ENCODE measurements at regions of chr15 and their contacts with region 1.

Region 1: DNA sequence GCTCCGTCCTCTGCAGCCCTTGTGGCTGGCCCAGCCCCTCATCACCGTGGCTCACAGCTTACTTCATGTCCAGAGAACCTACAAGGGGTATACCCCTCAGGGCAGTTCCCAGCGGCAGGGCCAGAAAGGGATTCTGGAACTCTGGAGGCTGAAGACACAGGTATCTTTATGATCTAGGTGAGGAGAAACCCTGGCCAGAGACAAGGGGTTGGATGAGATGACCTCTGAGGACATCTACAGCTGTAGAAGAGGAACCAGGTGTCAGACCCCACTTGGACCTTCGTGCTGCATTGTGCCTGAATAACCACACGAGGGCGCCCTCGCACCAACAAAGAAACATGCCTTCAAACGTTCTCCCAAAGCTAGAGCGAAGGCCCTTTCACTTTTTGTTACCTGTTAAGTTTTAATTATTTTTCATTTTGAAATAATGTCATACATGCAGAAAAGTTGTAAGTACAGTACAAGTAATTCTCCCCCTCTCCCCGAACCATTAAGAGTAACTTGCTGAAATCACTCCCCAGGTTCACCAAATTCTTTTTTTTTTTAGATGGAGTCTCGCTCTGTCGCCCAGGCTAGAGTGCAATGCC is 118.7 kb upstream of the SMAD3 start:
- DNase-seq: peak; percentile 44 to 72
- H3K4me3 ChIP-seq: no peak overlapping the region
- H3K27ac ChIP-seq: no peak overlapping the region
- H3K4me1 ChIP-seq: peaks cover 17% of the 10 kb centered on the region
- H3K27me3 ChIP-seq: no peaks in the 10 kb centered on the region
- CTCF ChIP-seq: peak; percentile 89

Region 2: DNA sequence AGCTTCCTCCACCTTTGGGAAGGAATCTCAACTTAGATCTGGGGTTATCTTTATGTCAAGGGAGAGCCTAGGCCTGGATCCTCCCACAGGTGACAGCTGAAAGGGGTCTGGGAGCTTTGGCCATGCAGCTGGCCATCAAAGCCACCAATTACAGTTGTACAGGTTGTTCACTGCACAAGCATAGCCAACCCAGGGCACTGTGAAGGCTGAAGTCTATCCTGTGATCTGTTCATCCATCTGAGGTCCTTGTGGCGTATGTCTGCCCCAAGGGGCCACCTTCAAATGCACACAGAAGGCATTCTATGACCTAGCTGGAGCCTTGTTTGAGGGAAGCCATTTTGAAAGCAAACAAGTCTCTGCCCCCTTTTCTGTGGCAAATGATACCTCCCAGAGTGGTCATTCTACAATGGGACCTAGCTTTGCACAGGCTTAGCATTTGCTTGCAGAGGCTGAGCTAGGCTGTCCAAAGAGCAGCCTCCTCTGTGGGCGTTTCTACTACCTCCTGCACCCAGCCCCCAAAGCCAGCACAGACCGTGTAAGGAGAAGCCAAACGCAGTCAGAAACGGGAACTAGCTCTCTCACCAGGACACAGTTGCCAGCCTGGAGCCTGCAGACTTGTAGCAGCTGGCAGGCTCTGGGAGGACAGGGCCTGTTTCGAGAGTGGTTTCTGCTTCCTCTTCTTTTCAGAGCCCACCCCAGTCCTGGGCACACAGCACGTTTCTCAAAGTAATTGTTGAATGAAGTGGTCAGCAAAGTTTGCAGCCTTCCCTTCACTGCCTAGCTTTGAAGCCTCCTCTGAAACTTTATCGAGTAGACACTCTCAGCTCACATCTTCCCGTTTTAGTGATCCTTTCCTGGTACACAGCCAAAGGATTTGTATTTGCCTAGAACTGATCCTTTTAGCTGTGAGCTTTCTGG is 38.6 kb before region 1 on chr15:
- CTCF ChIA-PET with region 1: interaction called, 17 read pairs
- POLR2A ChIA-PET with region 1: no interaction called
- intact Hi-C with region 1: loop called (anchors 1 kb)
- DNase-seq: no peak
- H3K4me3 ChIP-seq: no peak overlapping the region
- H3K27ac ChIP-seq: no peak overlapping the region
- H3K4me1 ChIP-seq: no peaks in the 10 kb centered on the region
- H3K27me3 ChIP-seq: no peaks in the 10 kb centered on the region
- CTCF ChIP-seq: no peak

Region 3: GRCh38 chr15:67065444-67066093 is 118.9 kb after region 1 on chr15 and contains the start of gene SMAD3:
- CTCF ChIA-PET with region 1: interaction called, 4 read pairs
- POLR2A ChIA-PET with region 1: no interaction called
- intact Hi-C with region 1: loop called (anchors 2 kb)
- DNase-seq: peak; percentile 73 to 92
- H3K4me3 ChIP-seq: peak within 1 kb of the TSS; percentile 88
- H3K27ac ChIP-seq: peak within 1 kb of the TSS; percentile 87
- H3K4me1 ChIP-seq: peaks cover 21% of the 10 kb centered on the region
- H3K27me3 ChIP-seq: no peaks in the 10 kb centered on the region
- CTCF ChIP-seq: no peak
- total RNA-seq, gene SMAD3: 99.5 and 109 TPM in 2 replicates

Region 4: GRCh38 chr15:67175643-67176071 is 229.0 kb after region 1 on chr15:
- CTCF ChIA-PET with region 1: no interaction called
- POLR2A ChIA-PET with region 1: no interaction called
- intact Hi-C with region 1: loop called (anchors 5 kb)
- DNase-seq: no peak
- H3K4me3 ChIP-seq: no peak overlapping the region
- H3K27ac ChIP-seq: peak overlapping the region; percentile 85
- H3K4me1 ChIP-seq: peaks cover 60% of the 10 kb centered on the region
- H3K27me3 ChIP-seq: no peaks in the 10 kb centered on the region
- CTCF ChIP-seq: no peak

Region 5: DNA sequence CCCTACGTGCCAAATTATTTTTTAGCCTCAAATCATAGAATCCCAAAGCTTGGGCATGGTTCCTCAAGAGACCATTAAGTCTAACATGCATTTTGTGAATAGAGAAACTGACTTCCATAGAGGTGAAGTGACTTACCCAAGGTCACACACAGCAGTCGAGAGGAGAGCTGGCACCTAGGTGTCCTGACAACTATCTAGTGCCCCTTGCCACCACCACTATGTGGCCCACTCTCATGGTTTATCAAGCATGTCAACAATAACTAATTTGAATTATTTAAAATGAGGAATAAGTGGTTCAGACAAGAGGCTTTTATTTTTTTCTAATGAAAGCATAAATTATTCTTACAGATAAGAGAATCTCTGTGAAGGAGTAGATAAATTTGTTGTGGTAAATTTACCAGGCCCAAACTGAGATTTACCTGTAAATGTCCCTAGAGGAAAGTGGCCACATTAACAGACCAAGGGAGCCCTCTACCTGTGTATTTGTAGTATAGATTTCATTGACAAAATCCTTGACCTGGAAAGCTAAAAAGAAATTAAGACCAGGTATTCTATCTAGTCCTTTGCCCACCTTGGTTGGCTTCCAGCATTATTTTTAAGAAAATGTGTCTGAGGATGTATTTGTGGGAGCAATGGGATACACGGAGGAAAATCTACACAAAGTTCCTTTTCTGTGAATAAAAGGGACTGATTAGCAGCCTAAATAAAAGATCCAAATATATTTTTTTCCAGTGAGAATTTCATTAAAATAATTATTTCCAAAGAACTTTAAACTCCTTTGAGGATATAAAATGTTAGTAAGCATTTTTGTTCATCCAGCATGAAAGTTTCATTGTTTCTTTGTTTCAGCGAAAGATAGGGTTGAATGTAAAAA is 357.1 kb after region 1 on chr15:
- CTCF ChIA-PET with region 1: interaction called, 6 read pairs
- POLR2A ChIA-PET with region 1: no interaction called
- intact Hi-C with region 1: loop called (anchors 1 kb)
- DNase-seq: no peak
- H3K4me3 ChIP-seq: no peak overlapping the region
- H3K27ac ChIP-seq: no peak overlapping the region
- H3K4me1 ChIP-seq: no peaks in the 10 kb centered on the region
- H3K27me3 ChIP-seq: no peaks in the 10 kb centered on the region
- CTCF ChIP-seq: peak; percentile 66